AG04450 (cell line): ENCODE measurements at regions of chr7 and their contacts with region 1.

Region 1: DNA sequence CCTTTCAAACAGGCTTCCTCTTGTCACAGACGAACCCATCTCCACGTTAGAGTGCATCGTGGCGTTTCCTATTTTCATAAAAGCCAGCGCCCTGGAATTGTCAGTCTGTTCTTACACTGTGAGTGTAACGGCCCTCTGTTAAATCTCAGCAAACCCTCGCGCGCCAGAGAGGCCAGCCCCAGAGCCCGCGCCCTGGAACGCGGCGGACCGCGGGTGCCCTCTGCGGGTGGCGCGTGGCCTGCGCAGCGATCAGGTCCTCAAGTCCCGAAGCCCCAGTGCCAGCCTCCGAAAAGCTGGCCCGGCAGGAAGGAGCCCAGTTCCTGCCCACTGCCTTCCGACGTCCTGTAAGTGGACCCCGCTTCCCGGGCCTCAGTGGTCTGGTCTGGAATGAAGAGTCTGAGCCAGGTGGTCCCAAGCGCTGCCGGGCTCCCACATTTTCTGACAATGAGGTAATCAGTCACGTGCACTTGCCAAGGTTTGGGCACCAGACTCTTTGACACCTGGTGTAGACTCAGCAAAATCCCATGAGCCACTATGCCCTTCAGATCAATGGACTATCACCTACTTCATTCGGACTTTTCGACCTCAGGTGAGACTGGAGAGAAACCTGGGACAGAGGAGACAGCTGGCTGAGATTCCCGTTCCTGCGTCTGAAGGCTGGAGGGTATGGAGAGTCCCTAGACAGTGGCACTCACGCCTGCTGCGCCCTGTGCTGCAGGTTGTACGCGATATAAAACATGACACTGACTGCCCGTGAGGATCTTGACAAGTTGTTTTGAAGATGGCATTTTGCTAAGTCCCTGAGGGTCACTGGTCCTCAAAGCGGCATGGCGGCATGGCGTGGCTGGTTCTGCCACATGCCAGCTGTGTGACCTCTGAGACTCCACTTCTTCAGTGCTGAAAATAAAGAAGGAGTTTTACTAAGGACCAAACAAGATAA is 109.4 kb upstream of the LANCL2 start:
- DNase-seq: peak; percentile 32
- H3K4me3 ChIP-seq: peak overlapping the region; percentile 70
- H3K27ac ChIP-seq: peak overlapping the region; percentile 47
- H3K27me3 ChIP-seq: peaks cover 3% of the 10 kb centered on the region
- CTCF ChIP-seq: peak; percentile 80

Region 2: DNA sequence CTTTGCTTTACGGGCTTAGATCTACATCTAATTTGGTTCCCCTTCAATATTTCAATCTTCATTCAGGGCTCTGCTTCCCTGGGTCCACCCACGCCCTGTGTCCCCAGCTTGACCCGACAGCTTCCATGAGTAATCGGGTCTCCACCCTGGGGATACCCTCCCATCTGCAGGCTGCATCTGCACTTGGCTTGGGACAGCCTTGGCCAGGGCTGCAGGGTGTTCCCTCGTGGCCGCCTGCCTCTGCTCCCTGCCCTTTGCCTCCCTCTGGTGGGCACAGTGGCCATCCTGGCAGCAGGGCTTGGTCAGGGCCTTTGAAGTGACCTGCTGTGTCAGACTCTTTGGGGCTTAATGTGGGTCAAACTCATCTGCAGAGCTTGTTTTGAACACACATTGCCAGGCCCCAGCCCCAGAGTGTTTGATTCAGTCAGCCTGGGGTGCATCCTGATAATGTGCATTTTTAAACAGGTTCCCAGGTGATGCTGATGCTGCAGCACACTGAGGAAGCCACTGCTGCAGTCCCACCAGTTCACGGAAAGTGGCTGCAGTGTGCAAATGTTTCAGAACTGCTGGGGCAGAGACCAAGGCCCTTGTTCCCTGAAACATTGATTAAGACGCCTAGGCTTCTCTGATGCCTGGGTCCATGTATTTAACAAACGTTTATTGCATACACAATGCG is 416.1 kb before region 1 on chr7:
- CTCF ChIA-PET with region 1: interaction called, 15 read pairs
- POLR2A ChIA-PET with region 1: no interaction called
- DNase-seq: no peak
- H3K4me3 ChIP-seq: no peak overlapping the region
- H3K27ac ChIP-seq: no peak overlapping the region
- H3K27me3 ChIP-seq: no peaks in the 10 kb centered on the region
- CTCF ChIP-seq: peak; percentile 67

Region 3: GRCh38 chr7:55024776-55025175 is 231.0 kb before region 1 on chr7:
- CTCF ChIA-PET with region 1: interaction called, 16 read pairs
- POLR2A ChIA-PET with region 1: interaction called, 4 read pairs
- DNase-seq: no peak
- H3K4me3 ChIP-seq: no peak overlapping the region
- H3K27ac ChIP-seq: no peak overlapping the region
- H3K27me3 ChIP-seq: no peaks in the 10 kb centered on the region
- CTCF ChIP-seq: no peak

Region 4: DNA sequence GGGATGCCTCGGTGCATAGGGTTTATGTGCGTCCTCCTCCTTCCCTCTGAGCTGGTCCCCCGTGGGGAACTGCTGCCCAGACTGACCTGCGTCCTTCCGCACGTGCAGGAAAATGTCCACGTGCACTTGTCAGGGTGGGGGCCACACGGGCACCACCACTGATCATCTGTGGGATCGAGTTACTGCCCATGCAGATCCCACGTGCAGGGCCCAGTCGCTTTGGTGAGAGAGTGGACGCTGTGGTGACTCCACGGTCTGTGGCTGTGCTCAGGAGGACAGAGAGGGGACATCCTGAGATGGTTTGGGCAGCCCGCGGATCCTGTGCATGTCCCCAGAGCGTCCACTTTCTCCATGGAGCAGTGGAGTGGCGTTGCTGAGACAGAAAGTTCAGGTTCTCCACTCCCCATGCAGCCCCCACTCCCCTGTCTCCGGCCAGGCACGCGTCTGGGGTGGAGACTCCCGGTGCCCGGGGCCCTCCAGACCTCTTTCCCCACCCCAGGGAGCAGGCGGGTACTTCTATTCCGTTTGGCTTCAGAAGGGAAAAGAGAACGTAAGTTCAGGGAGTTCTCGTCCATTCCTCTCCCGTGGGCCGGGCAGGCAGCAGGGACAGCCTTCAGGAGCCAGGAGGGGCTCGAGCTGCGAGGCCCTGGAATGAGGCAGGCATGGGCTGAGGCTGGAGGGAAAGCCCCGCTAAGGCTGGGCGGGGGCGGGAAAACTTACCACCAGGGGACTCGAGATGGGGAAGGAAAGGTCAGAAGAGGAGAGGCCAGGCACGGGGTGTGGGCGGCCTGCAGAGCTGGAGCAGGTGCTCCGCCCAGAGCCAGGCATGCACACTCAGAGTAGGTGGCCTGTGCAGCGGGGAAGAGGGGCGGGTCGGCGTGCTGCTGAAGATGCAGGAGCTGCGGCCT is 177.0 kb before region 1 on chr7:
- CTCF ChIA-PET with region 1: interaction called, 16 read pairs
- POLR2A ChIA-PET with region 1: no interaction called
- DNase-seq: no peak
- H3K4me3 ChIP-seq: no peak overlapping the region
- H3K27ac ChIP-seq: no peak overlapping the region
- H3K27me3 ChIP-seq: no peaks in the 10 kb centered on the region
- CTCF ChIP-seq: no peak

Region 5: GRCh38 chr7:55132890-55133551 is 122.7 kb before region 1 on chr7:
- CTCF ChIA-PET with region 1: interaction called, 15 read pairs
- POLR2A ChIA-PET with region 1: interaction called, 9 read pairs
- DNase-seq: peak; percentile 98
- H3K4me3 ChIP-seq: peak overlapping the region; percentile 42
- H3K27ac ChIP-seq: peak overlapping the region; percentile 100
- H3K27me3 ChIP-seq: no peaks in the 10 kb centered on the region
- CTCF ChIP-seq: no peak

Region 6: GRCh38 chr7:55192718-55193117 is 63.0 kb before region 1 on chr7:
- CTCF ChIA-PET with region 1: interaction called, 10 read pairs
- POLR2A ChIA-PET with region 1: no interaction called
- DNase-seq: peak; percentile 52
- H3K4me3 ChIP-seq: no peak overlapping the region
- H3K27ac ChIP-seq: peak overlapping the region; percentile 91
- H3K27me3 ChIP-seq: no peaks in the 10 kb centered on the region
- CTCF ChIP-seq: no peak

Region 7: GRCh38 chr7:55271069-55271626 is 15.4 kb after region 1 on chr7:
- CTCF ChIA-PET with region 1: interaction called, 32 read pairs
- POLR2A ChIA-PET with region 1: no interaction called
- DNase-seq: no peak
- H3K4me3 ChIP-seq: no peak overlapping the region
- H3K27ac ChIP-seq: no peak overlapping the region
- H3K27me3 ChIP-seq: peaks cover 46% of the 10 kb centered on the region
- CTCF ChIP-seq: peak; percentile 67